WTC11 (cell line): ENCODE measurements at regions of chr7 and their contacts with region 1.

Region 1: GRCh38 chr7:138008547-138009349 is 6.9 kb upstream of the CREB3L2 start:
- DNase-seq: no peak
- ATAC-seq: peak; percentile 71
- H3K4me3 Mint-ChIP-seq: no peak overlapping the region
- H3K27ac Mint-ChIP-seq: peak overlapping the region; percentile 91
- H3K4me1 Mint-ChIP-seq: peaks cover 18% of the 10 kb centered on the region
- H3K27me3 Mint-ChIP-seq: no peaks in the 10 kb centered on the region
- CTCF ChIP-seq: peak; percentile 82

Region 2: DNA sequence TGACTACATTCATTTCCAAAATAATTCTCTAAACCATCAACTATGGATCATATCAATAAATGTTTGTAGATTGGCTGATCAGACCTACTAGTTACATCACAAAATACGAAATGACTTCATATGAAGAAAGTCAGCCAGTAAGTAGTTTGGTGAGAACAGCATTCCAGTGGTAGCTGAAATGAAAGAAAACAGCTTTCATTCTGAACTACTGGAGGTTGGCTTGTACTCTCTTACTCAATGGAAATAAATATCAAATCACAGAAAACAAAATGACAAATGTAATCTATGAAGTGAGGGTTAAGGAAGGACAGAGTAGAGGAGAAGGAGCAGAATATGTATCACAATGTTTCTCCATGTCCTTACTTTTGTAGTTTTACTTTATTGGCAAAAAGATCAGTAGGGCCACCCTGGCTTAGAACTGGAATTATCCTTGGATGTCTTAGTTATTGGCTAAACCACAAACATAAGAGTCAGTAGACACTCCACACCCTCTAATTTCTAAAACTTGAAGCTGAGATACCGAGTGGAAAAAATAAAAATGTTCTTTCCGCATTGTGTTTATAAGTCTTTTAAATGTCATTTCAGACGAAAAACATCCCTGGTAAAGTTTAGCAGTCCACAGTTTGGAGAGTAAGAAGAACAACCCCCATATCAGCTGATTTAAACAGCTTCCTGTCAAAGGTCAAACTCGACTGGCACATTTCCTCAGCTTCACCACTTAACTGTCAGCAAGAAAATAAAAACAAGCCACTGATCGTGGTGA is 87.9 kb before region 1 on chr7:
- CTCF ChIA-PET with region 1: interaction called, 11 read pairs
- POLR2A ChIA-PET with region 1: interaction called, 3 read pairs
- DNase-seq: no peak
- ATAC-seq: no peak
- H3K4me3 Mint-ChIP-seq: no peak overlapping the region
- H3K27ac Mint-ChIP-seq: peak overlapping the region; percentile 97
- H3K4me1 Mint-ChIP-seq: peaks cover 57% of the 10 kb centered on the region
- H3K27me3 Mint-ChIP-seq: no peaks in the 10 kb centered on the region
- CTCF ChIP-seq: no peak